ENCODE measurements at regions of chr17 and their contacts with region 1.

Region 1: DNA sequence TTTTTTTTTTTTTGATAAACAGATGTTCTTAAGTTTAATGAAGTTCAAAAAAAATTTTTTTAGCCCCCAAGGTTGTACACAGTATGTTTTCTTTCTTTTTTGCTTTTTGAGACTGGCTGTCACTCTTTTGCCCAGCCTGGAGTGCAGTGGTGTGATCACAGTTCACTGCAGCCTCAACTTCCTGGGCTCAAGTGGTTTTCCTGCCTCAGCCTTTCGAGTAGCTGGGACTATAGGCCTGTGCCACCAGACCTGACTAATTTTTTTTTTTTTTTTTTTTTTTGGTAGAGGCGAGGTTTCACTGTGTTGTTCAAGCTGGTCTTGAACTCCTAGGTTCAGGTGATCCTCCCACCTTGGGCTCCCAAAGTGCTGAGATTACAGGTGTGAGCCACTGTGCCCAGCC is 12.8 kb downstream of the ITGAE start:
- DNase-seq: peak in 3 of 35 experiments; percentile 19 to 57 (median 33)
- ATAC-seq: peak in 3 of 4 experiments; percentile 26 to 53 (median 47)
- H3K4me3 ChIP-seq: no peak overlapping the region
- H3K4me3 Mint-ChIP-seq: no peak overlapping the region
- H3K27ac ChIP-seq: no peak overlapping the region
- H3K27ac Mint-ChIP-seq: peak overlapping the region in 1 of 2 donors; percentile 36
- H3K4me1 ChIP-seq: peaks cover 2 to 27% of the 10 kb centered on the region in 2 experiments
- H3K4me1 Mint-ChIP-seq: peaks cover 17 to 42% (median 31%) of the 10 kb centered on the region in 3 donors
- H3K27me3 ChIP-seq: no peaks in the 10 kb centered on the region
- H3K27me3 Mint-ChIP-seq: no peaks in the 10 kb centered on the region

Region 2: DNA sequence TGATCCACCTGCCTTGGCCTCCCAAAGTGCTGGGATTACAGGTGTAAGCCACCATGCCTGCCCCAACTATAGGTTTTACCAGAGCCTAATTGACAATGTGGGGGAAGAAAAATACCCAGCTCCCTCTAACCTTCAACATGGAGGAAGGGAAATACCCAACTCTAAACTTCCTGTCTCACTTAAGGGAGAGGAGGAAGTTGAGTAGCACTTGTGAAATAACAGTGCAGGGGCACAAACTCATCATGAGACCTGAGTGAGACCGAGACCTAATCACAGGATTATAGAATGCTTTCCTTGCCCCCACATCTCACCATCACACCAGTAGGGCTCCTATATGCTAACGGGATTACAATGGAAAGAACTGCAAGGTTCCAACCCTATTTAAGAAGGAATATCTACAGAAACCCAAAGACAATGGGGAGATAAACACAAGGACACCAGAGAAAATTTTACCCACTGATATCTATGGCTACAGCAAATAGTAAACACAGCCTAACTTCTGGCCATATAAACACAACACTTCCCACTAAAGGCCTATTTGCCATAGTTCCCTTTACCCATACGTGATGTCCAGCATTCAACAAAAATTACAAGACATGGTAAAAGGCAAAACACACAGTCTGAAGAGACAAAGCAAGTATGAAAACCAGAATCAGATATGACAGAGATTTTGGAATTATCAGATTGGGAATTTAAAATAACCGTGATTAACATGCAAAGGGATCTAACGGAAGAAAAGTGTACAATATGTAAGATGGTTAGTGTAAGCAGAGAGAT is 516.9 kb before region 1 on chr17:
- CTCF ChIA-PET with region 1: no interaction called
- POLR2A ChIA-PET with region 1: no interaction called
- DNase-seq: no peak
- ATAC-seq: no peak
- H3K4me3 ChIP-seq: no peak overlapping the region
- H3K4me3 Mint-ChIP-seq: no peak overlapping the region
- H3K27ac ChIP-seq: no peak overlapping the region
- H3K27ac Mint-ChIP-seq: no peak overlapping the region
- H3K4me1 ChIP-seq: no peaks in the 10 kb centered on the region
- H3K4me1 Mint-ChIP-seq: no peaks in the 10 kb centered on the region
- H3K27me3 ChIP-seq: peaks cover 0 to 4% of the 10 kb centered on the region in 2 experiments
- H3K27me3 Mint-ChIP-seq: peaks cover 3 to 14% of the 10 kb centered on the region in 2 donors

Region 3: GRCh38 chr17:4077581-4077980 is 289.4 kb after region 1 on chr17:
- CTCF ChIA-PET with region 1: interaction called in 1 of 2 experiments, 12 read pairs
- POLR2A ChIA-PET with region 1: no interaction called
- DNase-seq: no peak
- ATAC-seq: no peak
- H3K4me3 ChIP-seq: no peak overlapping the region
- H3K4me3 Mint-ChIP-seq: no peak overlapping the region
- H3K27ac ChIP-seq: no peak overlapping the region
- H3K27ac Mint-ChIP-seq: peak overlapping the region in 1 of 2 donors; percentile 52
- H3K4me1 ChIP-seq: peaks cover 0 to 10% of the 10 kb centered on the region in 2 experiments
- H3K4me1 Mint-ChIP-seq: peaks cover 0 to 7% (median 5%) of the 10 kb centered on the region in 3 donors
- H3K27me3 ChIP-seq: no peaks in the 10 kb centered on the region
- H3K27me3 Mint-ChIP-seq: no peaks in the 10 kb centered on the region